ENCODE measurements at regions of chr19 and their contacts with region 1.

Region 1: DNA sequence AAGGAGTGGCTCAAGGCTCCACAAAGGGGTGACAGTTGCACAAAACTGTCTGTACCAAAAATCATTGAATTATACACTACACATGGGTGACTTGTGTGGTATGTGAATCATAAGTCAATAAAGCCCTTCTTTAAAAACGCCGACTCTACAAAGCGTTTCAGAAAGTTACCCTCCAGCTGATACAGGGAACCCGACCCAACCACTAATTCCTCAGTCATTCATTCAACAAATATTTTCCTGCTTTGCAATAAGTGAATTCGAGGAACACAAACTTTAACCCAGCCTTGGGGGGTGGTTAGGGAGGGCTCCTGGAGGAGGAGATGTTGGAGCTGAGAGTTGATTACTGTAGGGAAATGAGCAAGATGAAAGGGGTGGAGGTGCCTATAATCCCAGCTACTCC is 32.0 kb downstream of the LTBP4 start:
- DNase-seq: no peak
- ATAC-seq: no peak
- H3K4me3 Mint-ChIP-seq: no peak overlapping the region
- H3K27ac Mint-ChIP-seq: no peak overlapping the region
- H3K4me1 Mint-ChIP-seq: peaks cover 7% of the 10 kb centered on the region
- H3K27me3 Mint-ChIP-seq: peaks cover 6% of the 10 kb centered on the region
- CTCF ChIP-seq: no peak

Region 2: GRCh38 chr19:40529093-40529954 is 103.9 kb before region 1 on chr19:
- CTCF ChIA-PET with region 1: interaction called, 19 read pairs
- POLR2A ChIA-PET with region 1: no interaction called
- intact Hi-C with region 1: no loop called
- DNase-seq: peak; percentile 91
- ATAC-seq: peak; percentile 90
- H3K4me3 Mint-ChIP-seq: peak overlapping the region; percentile 38
- H3K27ac Mint-ChIP-seq: no peak overlapping the region
- H3K4me1 Mint-ChIP-seq: peaks cover 12% of the 10 kb centered on the region
- H3K27me3 Mint-ChIP-seq: peaks cover 20% of the 10 kb centered on the region
- CTCF ChIP-seq: peak; percentile 99

Region 3: GRCh38 chr19:40549007-40549708 is 84.0 kb before region 1 on chr19:
- CTCF ChIA-PET with region 1: interaction called, 35 read pairs
- POLR2A ChIA-PET with region 1: no interaction called
- intact Hi-C with region 1: no loop called
- DNase-seq: peak; percentile 87
- ATAC-seq: peak; percentile 99
- H3K4me3 Mint-ChIP-seq: no peak overlapping the region
- H3K27ac Mint-ChIP-seq: no peak overlapping the region
- H3K4me1 Mint-ChIP-seq: peaks cover 7% of the 10 kb centered on the region
- H3K27me3 Mint-ChIP-seq: peaks cover 34% of the 10 kb centered on the region
- CTCF ChIP-seq: peak; percentile 40

Region 4: GRCh38 chr19:40603389-40604135 is 29.6 kb before region 1 on chr19:
- CTCF ChIA-PET with region 1: interaction called, 34 read pairs
- POLR2A ChIA-PET with region 1: interaction called, 3 read pairs
- intact Hi-C with region 1: no loop called
- DNase-seq: peak; percentile 99
- ATAC-seq: peak; percentile 78
- H3K4me3 Mint-ChIP-seq: peak overlapping the region; percentile 77
- H3K27ac Mint-ChIP-seq: no peak overlapping the region
- H3K4me1 Mint-ChIP-seq: peaks cover 69% of the 10 kb centered on the region
- H3K27me3 Mint-ChIP-seq: peaks cover 28% of the 10 kb centered on the region
- CTCF ChIP-seq: no peak

Region 5: GRCh38 chr19:40614622-40615411 is 18.4 kb before region 1 on chr19:
- CTCF ChIA-PET with region 1: interaction called, 126 read pairs
- POLR2A ChIA-PET with region 1: interaction called, 4 read pairs
- intact Hi-C with region 1: no loop called
- DNase-seq: peak; percentile 98
- ATAC-seq: peak; percentile 57
- H3K4me3 Mint-ChIP-seq: peak overlapping the region; percentile 84
- H3K27ac Mint-ChIP-seq: peak overlapping the region; percentile 99
- H3K4me1 Mint-ChIP-seq: peaks cover 46% of the 10 kb centered on the region
- H3K27me3 Mint-ChIP-seq: no peaks in the 10 kb centered on the region
- CTCF ChIP-seq: no peak

Region 6: GRCh38 chr19:40650749-40651305 is 17.6 kb after region 1 on chr19:
- CTCF ChIA-PET with region 1: interaction called, 54 read pairs
- POLR2A ChIA-PET with region 1: interaction called, 3 read pairs
- intact Hi-C with region 1: no loop called
- DNase-seq: no peak
- ATAC-seq: no peak
- H3K4me3 Mint-ChIP-seq: no peak overlapping the region
- H3K27ac Mint-ChIP-seq: no peak overlapping the region
- H3K4me1 Mint-ChIP-seq: peaks cover 1% of the 10 kb centered on the region
- H3K27me3 Mint-ChIP-seq: no peaks in the 10 kb centered on the region
- CTCF ChIP-seq: no peak

Region 7: GRCh38 chr19:40674291-40674690 is 41.1 kb after region 1 on chr19:
- CTCF ChIA-PET with region 1: no interaction called
- POLR2A ChIA-PET with region 1: no interaction called
- intact Hi-C with region 1: no loop called
- DNase-seq: no peak
- ATAC-seq: no peak
- H3K4me3 Mint-ChIP-seq: no peak overlapping the region
- H3K27ac Mint-ChIP-seq: no peak overlapping the region
- H3K4me1 Mint-ChIP-seq: no peaks in the 10 kb centered on the region
- H3K27me3 Mint-ChIP-seq: no peaks in the 10 kb centered on the region
- CTCF ChIP-seq: no peak

Measured in activated CD8-positive, alpha-beta T cell treated with anti-CD3 and anti-CD28 coated beads for 36 hours (primary cell).